ENCODE measurements at regions of chr17 and their contacts with region 1.

Region 1: GRCh38 chr17:12983991-12984884 is 33.6 kb downstream of the ELAC2 start:
- DNase-seq: peak; percentile 54 to 61
- ATAC-seq: peak; percentile 24 to 81 (median 51)
- H3K4me3 ChIP-seq: peak overlapping the region in 5 of 10 donors; percentile 17 to 32 (median 25)
- H3K27ac ChIP-seq: peak overlapping the region; percentile 31 to 79 (median 67)
- H3K4me1 ChIP-seq: peaks cover 6 to 44% (median 25%) of the 10 kb centered on the region in 9 donors
- H3K27me3 ChIP-seq: no peaks in the 10 kb centered on the region
- CTCF ChIP-seq: no peak

Region 2: GRCh38 chr17:12765548-12765947 is 218.7 kb before region 1 on chr17:
- intact Hi-C with region 1: loop called in 1 of 10 experiments (anchors 10 kb)
- DNase-seq: peak in 1 of 2 donors; percentile 48
- ATAC-seq: peak; percentile 31 to 93 (median 70)
- H3K4me3 ChIP-seq: no peak overlapping the region
- H3K27ac ChIP-seq: peak overlapping the region in 1 of 10 donors; percentile 25
- H3K4me1 ChIP-seq: peaks cover 0 to 13% (median 3%) of the 10 kb centered on the region in 9 donors
- H3K27me3 ChIP-seq: no peaks in the 10 kb centered on the region
- CTCF ChIP-seq: no peak

Region 3: DNA sequence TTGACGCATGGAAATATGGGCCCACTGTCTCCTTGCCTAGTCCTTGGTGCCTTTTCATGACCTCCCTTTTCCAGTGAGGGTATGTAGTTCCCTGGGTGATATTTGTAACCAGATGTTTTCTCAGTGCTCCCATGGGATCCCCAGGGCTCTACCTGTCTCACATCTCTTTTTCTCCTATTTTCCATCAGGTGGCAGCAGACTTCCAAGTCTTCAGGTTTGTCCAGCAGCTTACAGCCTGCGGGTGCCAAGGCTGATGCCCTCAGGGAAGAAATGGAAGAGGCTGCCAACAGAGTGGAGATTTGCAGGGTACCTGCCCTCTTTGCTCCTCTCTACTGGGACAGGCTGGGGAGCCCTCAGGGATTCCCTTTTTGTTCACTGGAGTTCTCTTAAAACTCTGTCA is 55.5 kb before region 1 on chr17:
- intact Hi-C with region 1: loop called in 1 of 10 experiments (anchors 10 kb)
- DNase-seq: no peak
- ATAC-seq: peak in 3 of 8 donors; percentile 44 to 53 (median 47)
- H3K4me3 ChIP-seq: no peak overlapping the region
- H3K27ac ChIP-seq: peak overlapping the region in 4 of 10 donors; percentile 3 to 61 (median 58)
- H3K4me1 ChIP-seq: peaks cover 0 to 24% (median 8%) of the 10 kb centered on the region in 9 donors
- H3K27me3 ChIP-seq: no peaks in the 10 kb centered on the region
- CTCF ChIP-seq: peak in 5 of 9 donors; percentile 15 to 30 (median 28)

Region 4: DNA sequence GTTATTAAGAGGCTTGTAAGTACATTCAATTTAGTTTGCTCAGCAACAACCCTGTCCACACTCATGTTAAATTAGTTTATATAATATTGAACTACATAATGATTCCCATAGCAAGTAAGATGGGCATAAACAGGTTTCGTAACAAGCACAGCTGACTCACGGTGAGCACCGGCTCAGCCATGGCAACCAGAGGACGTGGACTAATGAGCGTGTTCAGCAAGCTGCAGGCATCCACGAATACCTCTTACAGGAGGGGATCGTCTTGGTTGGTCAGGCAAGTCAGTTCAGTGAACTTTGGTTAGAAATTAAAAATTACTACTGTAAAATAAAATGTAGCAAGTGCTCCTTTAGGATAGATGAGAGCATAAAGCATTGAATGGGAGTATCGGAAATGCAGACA is 24.8 kb before region 1 on chr17:
- intact Hi-C with region 1: no loop called
- DNase-seq: no peak
- ATAC-seq: no peak
- H3K4me3 ChIP-seq: no peak overlapping the region
- H3K27ac ChIP-seq: no peak overlapping the region
- H3K4me1 ChIP-seq: no peaks in the 10 kb centered on the region
- H3K27me3 ChIP-seq: no peaks in the 10 kb centered on the region
- CTCF ChIP-seq: no peak

Region 5: DNA sequence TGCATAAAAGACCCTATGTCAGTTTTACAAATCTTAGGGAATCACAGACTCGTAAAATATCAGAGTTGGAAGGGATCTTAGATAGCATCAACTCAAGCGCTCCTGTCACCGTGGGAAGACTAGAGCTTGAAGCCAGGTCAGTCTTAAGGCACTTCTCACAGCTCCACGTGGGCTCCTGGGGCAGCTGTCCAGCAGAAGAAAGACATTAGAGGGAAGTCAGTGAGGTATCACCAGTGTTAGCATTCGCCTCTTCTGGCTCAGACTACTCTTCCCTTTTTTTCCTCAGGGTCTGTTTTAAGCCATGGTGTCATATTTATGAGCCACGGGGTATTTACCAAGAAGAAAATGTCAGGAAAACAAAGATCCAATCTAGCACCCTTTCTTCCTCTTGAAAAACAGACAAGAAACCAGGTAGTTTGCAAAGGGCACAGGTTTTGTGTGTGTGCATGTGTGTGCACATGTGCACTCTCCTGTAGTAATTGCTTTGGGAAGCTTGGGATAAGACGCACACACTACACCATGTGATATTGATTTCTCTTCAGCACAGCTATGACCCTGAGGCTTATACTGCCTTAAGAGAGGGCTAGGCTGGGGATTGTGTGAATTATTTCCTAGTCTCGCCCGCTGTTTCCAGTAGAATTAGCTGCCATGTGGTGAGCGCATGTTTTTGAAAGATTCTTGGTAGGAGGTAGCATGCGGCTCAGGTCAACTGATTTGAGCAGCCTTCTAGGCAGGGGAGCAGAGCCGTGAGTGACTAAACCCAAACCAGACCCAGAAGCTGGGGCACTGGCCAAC is 94.5 kb after region 1 on chr17:
- intact Hi-C with region 1: no loop called
- DNase-seq: no peak
- ATAC-seq: no peak
- H3K4me3 ChIP-seq: no peak overlapping the region
- H3K27ac ChIP-seq: no peak overlapping the region
- H3K4me1 ChIP-seq: no peaks in the 10 kb centered on the region
- H3K27me3 ChIP-seq: peaks cover 0 to 9% (median 0%) of the 10 kb centered on the region in 7 donors
- CTCF ChIP-seq: no peak

Measured in heart right ventricle (tissue), 16 donors.